Posterior cingulate gyrus (tissue), 11 donors: ENCODE measurements at regions of chr5 and their contacts with region 1.

Region 1: DNA sequence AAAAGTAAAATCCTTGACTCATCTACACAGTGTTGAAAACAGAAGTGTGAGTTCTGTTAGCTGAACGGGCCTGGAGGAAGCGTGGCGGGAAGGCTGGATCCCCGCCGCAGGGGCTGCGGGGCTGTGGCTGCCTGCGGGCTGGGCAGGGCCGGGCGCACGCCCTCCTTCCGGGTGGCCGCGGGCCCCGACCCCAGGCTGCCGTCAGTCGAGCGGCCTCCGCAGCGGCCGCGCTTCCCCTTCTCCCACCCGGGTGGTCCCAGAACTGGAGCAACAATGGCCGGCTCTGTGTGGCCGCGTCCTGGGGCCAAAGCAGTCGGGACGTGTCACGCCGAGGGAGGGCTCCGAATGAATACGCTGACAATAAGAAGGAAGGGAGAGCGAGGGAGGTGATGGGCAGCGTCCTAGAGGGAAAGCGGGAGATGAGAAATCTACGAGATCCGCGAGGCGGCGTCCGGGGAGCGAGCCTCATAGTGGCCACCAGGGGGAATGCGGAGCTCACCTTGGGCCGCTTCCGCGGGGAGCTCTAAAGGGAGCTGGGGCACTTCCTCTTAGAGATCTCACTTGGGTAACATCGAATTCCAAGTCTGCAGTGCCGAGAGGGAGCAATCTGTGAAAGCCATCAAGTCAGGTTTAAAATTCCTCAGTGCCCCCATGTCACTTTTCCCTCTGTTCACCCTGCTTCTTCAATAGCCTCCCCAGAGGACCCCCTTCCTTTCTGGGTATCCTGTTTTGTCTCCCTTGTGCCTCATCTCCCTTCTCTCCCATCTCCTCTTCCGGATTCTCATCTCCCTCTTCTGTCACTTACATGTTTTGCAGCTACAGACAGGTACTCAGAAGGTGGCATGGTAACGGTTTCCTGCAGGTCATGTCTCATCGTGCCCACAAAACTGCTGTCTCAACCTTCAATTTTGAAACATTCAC is 83.9 kb downstream of the SLC1A3 start:
- DNase-seq: peak; percentile 69 to 96 (median 83)

Region 2: DNA sequence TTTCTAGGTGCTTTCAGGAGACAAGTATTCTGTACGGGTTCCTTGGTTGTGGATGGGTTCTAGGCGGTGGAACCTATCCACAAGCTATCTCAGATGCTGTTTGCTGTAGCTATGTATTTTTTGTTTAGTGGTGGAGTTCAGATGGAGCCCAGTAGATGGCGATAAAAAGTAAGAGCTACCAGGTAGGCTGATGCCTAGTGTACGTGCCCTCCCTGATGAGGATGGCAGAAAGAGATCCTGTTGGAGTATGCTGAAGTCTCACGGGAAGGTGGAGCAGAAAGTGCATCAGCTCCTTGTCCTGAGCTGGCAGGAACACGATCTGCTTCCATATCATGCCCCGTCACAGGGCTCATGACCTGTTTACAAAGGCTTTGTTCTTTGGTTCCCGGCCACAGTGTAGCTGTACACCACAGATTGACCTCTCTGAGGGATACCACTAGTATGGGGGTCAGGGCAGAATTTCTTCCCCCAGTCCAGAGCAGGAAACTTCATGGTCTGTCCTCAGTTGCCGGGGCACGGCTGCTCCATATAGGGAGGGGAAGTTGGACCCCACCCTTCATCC is 611.0 kb before region 1 on chr5:
- intact Hi-C with region 1: no loop called
- DNase-seq: no peak

Region 3: GRCh38 chr5:36264202-36264760 is 426.0 kb before region 1 on chr5:
- intact Hi-C with region 1: loop called (anchors 10 kb)
- DNase-seq: no peak

Region 4: GRCh38 chr5:36414869-36415282 is 275.4 kb before region 1 on chr5:
- intact Hi-C with region 1: loop called (anchors 1 kb)
- DNase-seq: no peak

Region 5: GRCh38 chr5:36507332-36507952 is 182.9 kb before region 1 on chr5:
- intact Hi-C with region 1: loop called (anchors 5 kb)
- DNase-seq: peak in 8 of 10 donors; percentile 42 to 92 (median 78)

Region 6: DNA sequence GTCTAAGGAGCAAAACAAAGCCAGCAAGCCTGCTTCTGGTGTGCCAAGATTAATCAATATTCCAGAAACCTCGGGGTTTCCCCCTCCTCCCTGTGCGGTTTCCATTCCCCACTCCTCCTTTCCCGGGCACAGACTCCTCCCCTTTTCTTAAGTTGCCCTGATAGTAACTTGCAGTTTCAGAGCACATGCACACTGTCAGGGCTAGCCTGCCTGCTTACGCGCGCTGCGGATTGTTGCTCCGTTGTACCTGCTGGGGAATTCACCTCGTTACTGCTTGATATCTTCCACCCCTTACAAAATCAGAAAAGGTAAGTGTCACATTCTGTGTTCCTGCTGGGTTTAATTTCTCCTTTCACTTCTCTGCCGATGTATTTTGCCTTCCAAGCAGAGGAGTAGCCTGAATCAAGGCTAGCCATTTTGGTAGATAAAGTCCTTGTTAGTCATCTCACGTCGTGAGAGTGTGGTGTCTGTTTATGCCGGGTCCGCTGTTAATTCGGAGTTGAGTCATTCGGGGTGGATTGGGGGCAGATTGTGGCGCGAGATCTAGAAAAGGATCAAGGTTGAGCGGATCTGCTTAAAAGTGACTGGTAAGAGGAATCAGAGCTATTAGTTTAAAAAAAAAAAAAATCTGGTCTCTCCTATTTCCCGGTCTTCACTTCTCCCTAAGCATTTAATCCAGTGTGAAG is 83.7 kb before region 1 on chr5 and contains the start of gene SLC1A3:
- intact Hi-C with region 1: loop called (anchors 2 kb)
- DNase-seq: peak; percentile 41 to 93 (median 64)

Region 7: DNA sequence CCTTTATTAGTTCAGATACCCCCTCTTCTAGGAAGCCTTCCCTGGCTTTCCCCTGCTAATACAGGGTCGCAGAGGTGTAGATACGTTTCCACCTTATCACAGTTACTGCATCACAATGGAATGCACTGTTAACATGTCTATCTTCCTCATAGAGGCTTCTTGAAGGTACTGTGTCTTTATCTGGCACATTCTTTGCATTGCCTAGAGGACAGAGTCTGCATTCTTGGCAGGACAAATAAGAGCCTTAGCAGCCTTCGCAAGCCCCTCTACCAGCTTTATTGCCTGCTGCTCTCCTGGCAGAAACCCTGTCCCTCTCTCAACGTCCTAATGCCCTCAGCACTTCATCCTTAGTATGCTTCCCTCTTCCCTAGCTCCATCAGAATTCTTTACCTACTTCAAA is 52.2 kb before region 1 on chr5:
- intact Hi-C with region 1: no loop called
- DNase-seq: no peak

Region 8: DNA sequence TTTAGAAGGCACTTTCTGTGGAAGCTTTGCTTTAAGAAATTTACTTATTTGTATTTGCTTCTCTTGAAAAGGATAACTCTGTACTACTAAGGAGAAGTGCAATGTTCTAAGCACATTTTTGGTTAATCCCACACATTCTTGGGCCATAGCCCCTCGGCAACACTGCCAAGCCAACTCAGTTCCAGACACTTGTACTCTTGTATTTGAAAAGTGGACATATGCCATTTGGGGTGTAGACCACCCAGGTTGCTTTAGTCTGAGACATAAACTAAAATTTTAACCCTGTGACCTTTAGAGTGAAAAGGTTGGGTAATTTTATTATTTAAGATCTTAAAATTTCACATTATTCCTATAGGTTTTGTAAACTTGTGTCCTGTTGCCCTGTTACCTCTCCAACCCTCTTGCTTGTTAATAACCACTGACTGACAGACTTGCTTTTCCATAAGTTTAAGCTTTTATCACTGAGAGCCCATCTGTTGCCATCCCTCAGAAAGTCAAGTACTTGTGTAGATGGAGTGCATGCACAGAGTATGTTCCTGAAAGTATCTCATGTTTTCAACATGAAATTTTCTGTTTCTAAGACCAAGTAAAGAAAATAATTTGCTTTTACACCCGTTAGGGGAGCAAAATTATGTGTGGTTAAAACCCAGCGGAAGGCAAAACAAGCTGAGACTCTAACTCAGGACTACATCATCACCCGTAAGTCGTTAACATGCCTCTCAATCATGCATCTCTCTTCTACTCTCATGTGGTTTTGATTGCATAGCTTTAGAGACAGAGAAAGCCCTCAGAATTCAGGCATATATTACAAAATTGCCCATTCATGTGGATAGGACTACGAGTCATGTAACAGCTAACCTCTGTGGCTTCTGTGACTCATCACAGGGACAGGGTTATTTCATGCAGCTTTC is 1032.2 kb after region 1 on chr5:
- intact Hi-C with region 1: no loop called
- DNase-seq: no peak